ENCODE measurements at regions of chr7 and their contacts with region 1.

Region 1: DNA sequence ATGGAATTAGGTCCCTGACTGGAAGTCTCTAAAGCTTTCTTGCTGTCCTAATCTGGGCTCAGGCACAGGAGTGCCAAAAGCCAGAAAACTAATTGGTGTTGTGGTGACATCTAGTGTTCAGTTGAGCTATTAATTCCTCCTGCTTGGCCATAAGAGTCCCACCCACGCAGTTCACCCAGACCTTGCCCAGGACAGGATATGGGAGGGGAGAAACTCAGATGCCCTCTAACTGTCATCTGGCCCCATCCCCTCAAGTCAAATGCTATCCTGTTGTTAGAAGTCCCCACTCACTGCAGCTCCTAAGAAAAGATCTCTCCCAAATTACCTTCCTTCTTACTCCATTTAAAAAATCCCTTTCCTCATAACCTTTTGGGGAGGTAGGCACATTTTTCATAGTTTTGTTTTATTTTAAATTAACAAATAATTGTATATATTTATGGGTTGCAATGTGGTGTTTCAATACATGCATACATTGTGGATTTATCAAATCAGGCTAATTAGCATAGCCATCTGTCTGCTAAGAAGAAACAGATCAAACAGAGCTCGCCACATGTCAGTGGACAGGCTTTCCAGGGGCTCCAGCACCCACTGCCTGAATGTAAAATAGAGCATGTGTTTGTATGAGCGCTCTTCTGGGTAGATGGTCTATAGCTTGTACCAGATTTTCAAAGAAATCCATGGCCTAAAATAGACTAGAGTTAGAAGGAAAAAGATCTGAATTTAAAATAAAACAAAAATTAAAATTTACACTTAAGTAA is 84.0 kb downstream of the GSAP start:
- DNase-seq: peak; percentile 62 to 79
- H3K4me3 ChIP-seq: no peak overlapping the region
- H3K4me3 Mint-ChIP-seq: no peak overlapping the region
- H3K27ac Mint-ChIP-seq: no peak overlapping the region
- H3K4me1 ChIP-seq: peaks cover 9% of the 10 kb centered on the region
- H3K4me1 Mint-ChIP-seq: peaks cover 10% of the 10 kb centered on the region
- H3K27me3 ChIP-seq: no peaks in the 10 kb centered on the region
- H3K27me3 Mint-ChIP-seq: no peaks in the 10 kb centered on the region
- CTCF ChIP-seq: peak; percentile 50 to 72

Region 2: DNA sequence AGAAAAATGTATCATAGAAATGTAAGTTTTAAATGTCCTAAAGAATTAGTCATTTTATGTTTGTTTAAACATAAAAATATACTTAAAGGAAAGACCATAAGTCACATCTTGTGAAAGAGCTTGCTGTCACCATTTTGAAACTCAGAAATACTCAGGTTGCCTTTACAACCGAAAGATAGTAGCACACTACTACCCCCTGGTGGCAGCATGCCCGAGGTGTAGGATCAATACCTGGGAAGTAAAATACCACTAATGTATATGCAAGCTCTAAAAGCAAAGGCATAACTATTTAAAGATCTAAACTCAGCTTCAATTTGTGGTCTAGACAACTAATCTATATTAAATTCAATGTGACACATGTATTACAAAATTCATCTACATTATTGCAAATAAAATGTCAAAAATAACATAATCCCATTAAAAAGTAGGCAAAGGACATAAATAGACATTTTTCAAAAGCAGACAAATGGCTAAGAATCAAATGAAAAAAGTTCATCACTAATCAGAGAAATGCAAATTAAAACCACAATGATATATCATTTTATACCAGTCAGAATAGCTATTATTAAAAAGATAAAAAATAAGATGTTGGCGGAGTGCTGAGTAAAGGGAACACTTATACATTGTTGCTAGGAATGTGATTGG is 84.8 kb before region 1 on chr7:
- CTCF ChIA-PET with region 1: interaction called, 39 read pairs
- POLR2A ChIA-PET with region 1: no interaction called
- intact Hi-C with region 1: loop called (anchors 1 kb)
- DNase-seq: peak; percentile 80 to 88
- H3K4me3 ChIP-seq: no peak overlapping the region
- H3K4me3 Mint-ChIP-seq: no peak overlapping the region
- H3K27ac Mint-ChIP-seq: no peak overlapping the region
- H3K4me1 ChIP-seq: peaks cover 16% of the 10 kb centered on the region; the same call in 1 of the 2 replicates
- H3K4me1 Mint-ChIP-seq: peaks cover 5% of the 10 kb centered on the region
- H3K27me3 ChIP-seq: no peaks in the 10 kb centered on the region
- H3K27me3 Mint-ChIP-seq: peaks cover 7% of the 10 kb centered on the region
- CTCF ChIP-seq: peak; percentile 85 to 86

Region 3: GRCh38 chr7:77269360-77270093 is 62.6 kb before region 1 on chr7:
- CTCF ChIA-PET with region 1: no interaction called
- POLR2A ChIA-PET with region 1: interaction called, 14 read pairs
- intact Hi-C with region 1: no loop called
- DNase-seq: no peak
- H3K4me3 ChIP-seq: no peak overlapping the region
- H3K4me3 Mint-ChIP-seq: no peak overlapping the region
- H3K27ac Mint-ChIP-seq: no peak overlapping the region
- H3K4me1 ChIP-seq: no peaks in the 10 kb centered on the region
- H3K4me1 Mint-ChIP-seq: no peaks in the 10 kb centered on the region
- H3K27me3 ChIP-seq: no peaks in the 10 kb centered on the region
- H3K27me3 Mint-ChIP-seq: no peaks in the 10 kb centered on the region
- CTCF ChIP-seq: no peak

Region 4: GRCh38 chr7:77293046-77293445 is 39.1 kb before region 1 on chr7:
- CTCF ChIA-PET with region 1: no interaction called
- POLR2A ChIA-PET with region 1: no interaction called
- intact Hi-C with region 1: loop called (anchors 1 kb)
- DNase-seq: peak in 1 of 2 experiments; percentile 18
- H3K4me3 ChIP-seq: no peak overlapping the region
- H3K4me3 Mint-ChIP-seq: no peak overlapping the region
- H3K27ac Mint-ChIP-seq: no peak overlapping the region
- H3K4me1 ChIP-seq: no peaks in the 10 kb centered on the region
- H3K4me1 Mint-ChIP-seq: no peaks in the 10 kb centered on the region
- H3K27me3 ChIP-seq: no peaks in the 10 kb centered on the region
- H3K27me3 Mint-ChIP-seq: peaks cover 2% of the 10 kb centered on the region
- CTCF ChIP-seq: peak; percentile 20 to 43

Region 5: GRCh38 chr7:77321300-77321699 is 10.8 kb before region 1 on chr7:
- CTCF ChIA-PET with region 1: interaction called, 11 read pairs
- POLR2A ChIA-PET with region 1: no interaction called
- intact Hi-C with region 1: no loop called
- DNase-seq: no peak
- H3K4me3 ChIP-seq: no peak overlapping the region
- H3K4me3 Mint-ChIP-seq: no peak overlapping the region
- H3K27ac Mint-ChIP-seq: no peak overlapping the region
- H3K4me1 ChIP-seq: peaks cover 7% of the 10 kb centered on the region
- H3K4me1 Mint-ChIP-seq: no peaks in the 10 kb centered on the region
- H3K27me3 ChIP-seq: no peaks in the 10 kb centered on the region
- H3K27me3 Mint-ChIP-seq: no peaks in the 10 kb centered on the region
- CTCF ChIP-seq: no peak

Measured in Caco-2 (cell line).